ENCODE measurements at regions of chr3 and their contacts with region 1.

Region 1: DNA sequence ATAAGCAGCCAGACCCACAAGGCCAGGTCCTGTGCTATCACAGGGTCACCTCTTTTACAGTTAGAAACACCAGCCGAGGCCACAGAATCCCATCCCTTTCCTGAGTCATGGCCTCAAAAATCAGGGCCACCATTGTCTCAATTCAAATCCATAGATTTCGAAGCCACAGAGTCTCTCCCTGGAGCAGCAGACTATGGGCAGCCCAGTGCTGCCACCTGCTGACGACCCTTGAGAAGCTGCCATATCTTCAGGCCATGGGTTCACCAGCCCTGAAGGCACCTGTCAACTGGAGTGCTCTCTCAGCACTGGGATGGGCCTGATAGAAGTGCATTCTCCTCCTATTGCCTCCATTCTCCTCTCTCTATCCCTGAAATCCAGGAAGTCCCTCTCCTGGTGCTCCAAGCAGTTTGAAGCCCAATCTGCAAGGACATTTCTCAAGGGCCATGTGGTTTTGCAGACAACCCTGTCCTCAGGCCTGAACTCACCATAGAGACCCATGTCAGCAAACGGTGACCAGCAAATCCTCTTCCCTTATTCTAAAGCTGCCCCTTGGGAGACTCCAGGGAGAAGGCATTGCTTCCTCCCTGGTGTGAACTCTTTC is 39.6 kb downstream of the TGM4 start:
- DNase-seq: peak; percentile 40
- ATAC-seq: peak; percentile 85
- H3K4me3 ChIP-seq: no peak overlapping the region
- H3K27ac ChIP-seq: no peak overlapping the region
- H3K4me1 ChIP-seq: no peaks in the 10 kb centered on the region
- H3K27me3 ChIP-seq: no peaks in the 10 kb centered on the region
- CTCF ChIP-seq: peak; percentile 64 to 79 (median 77)
- POLR2A ChIP-seq: no peak
- RAD21 ChIP-seq: peak; percentile 89

Region 2: DNA sequence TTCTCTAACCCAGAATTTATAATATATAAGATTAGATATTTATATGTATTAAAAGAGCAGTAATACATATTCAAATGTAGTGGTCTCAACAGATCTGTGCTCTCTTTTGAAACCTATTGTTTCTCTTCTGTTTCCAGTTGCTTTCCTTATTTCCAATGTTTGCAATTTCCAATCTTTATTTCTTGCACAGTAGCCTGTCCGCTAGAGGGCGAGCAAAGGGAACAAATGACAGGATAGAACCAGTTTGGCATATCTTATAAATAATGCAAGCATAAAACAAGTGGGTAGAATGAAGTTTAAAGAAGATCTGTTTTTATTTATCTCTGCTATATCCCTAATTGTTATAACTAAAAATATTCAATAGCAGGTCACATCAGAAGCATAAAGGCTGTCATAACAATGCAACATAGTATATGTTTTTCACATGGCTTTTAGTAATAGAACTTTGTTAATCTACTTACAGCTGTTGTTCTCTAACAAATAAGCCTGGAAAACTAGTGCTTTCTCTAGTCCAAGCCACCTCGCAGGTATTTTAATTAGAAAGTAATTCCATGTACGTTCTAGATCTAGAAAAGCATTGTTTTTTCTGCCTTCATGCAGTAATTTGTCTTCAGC is 590.5 kb before region 1 on chr3:
- CTCF ChIA-PET with region 1: interaction called, 3 read pairs
- POLR2A ChIA-PET with region 1: no interaction called
- RAD21 ChIA-PET with region 1: no interaction called
- intact Hi-C with region 1: loop called (anchors 1 kb)
- DNase-seq: peak; percentile 46
- ATAC-seq: peak; percentile 76
- H3K4me3 ChIP-seq: no peak overlapping the region
- H3K27ac ChIP-seq: no peak overlapping the region
- H3K4me1 ChIP-seq: peaks cover 0 to 4% of the 10 kb centered on the region in 2 experiments; a peak in 1 of 4 replicates
- H3K27me3 ChIP-seq: no peaks in the 10 kb centered on the region
- CTCF ChIP-seq: peak; percentile 78 to 91 (median 81)
- POLR2A ChIP-seq: no peak
- RAD21 ChIP-seq: peak; percentile 84

Region 3: DNA sequence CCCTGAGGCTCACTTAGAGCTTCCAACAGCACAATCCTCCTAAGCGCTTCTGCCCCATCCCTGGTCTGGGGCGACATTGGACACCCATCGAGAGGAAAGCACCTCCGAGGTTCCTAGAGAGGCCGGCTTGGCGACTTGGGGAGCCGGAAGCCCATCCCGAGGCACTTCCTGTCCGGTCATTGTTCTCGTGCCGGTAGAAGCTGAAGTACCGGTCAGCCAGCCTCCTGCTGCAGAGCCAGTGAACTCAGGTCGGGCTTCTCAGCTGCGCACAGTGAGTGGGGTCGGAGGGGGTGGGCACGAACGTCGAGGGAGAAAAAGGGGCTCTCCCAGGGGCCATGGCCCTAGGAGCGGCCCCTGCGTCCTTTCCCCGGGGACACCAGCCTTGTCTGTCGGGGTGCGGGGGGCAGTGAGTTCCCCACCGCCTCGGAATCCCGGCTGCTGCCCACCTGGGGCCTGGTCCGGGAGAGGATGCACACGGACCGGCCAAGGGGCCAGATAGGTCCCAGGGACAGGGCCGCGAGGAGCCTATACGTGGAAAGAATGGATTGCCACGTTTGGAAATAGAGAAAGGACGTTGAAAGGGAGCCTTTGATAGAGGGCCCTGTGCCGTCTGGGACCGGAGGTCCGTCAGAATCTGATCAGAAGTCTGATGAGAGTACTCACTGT is 265.3 kb before region 1 on chr3 and contains the start of gene ZNF35:
- CTCF ChIA-PET with region 1: no interaction called
- POLR2A ChIA-PET with region 1: no interaction called
- RAD21 ChIA-PET with region 1: no interaction called
- intact Hi-C with region 1: loop called (anchors 10 kb)
- DNase-seq: peak; percentile 87
- ATAC-seq: peak; percentile 98
- H3K4me3 ChIP-seq: peak within 1 kb of the TSS; percentile 96 to 98
- H3K27ac ChIP-seq: peak within 1 kb of the TSS; percentile 52
- H3K4me1 ChIP-seq: peaks cover 4 to 9% of the 10 kb centered on the region in 2 experiments; a peak in 2 of 4 replicates
- H3K27me3 ChIP-seq: no peaks in the 10 kb centered on the region
- CTCF ChIP-seq: no peak
- POLR2A ChIP-seq: peak; percentile 49
- RAD21 ChIP-seq: no peak
- total RNA-seq, gene ZNF35: 7.9 TPM

Region 4: GRCh38 chr3:44932271-44932670 is 18.3 kb after region 1 on chr3:
- CTCF ChIA-PET with region 1: no interaction called
- POLR2A ChIA-PET with region 1: no interaction called
- RAD21 ChIA-PET with region 1: no interaction called
- intact Hi-C with region 1: no loop called
- DNase-seq: no peak
- ATAC-seq: no peak
- H3K4me3 ChIP-seq: no peak overlapping the region
- H3K27ac ChIP-seq: no peak overlapping the region
- H3K4me1 ChIP-seq: no peaks in the 10 kb centered on the region
- H3K27me3 ChIP-seq: no peaks in the 10 kb centered on the region
- CTCF ChIP-seq: no peak
- POLR2A ChIP-seq: no peak
- RAD21 ChIP-seq: no peak

Region 5: DNA sequence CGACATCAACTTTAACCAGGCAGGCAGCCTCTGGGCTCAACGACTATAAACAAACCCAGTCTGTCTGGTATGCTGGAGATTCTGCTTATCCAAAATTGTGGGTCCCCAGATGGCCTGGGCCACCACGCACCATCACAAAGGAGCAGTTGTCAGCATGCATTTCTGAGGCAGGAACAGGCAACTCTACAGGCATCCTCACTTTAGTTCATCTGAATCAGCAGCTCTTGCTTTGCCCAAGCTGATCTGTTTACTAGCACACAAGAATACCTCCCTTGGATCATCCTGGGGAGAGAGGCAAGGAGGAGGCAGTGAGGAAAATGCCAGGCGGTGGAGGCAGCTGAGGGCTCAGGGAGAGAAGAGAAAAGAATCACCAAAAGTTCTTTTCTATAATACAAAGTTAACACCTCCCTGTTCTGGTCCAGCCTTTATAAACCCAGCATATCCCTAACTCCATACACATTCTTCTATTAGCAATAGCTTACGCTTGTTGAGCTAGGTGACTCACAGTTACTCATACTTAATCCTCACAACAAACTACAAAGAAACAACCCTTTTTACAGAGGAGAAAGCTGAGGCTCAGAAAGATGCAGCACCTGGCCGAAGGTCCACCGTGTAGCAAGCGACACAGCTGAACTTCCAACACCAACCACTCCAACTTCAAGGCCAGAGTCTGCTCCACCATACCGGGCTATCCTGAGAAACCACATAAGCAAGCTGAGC is 28.4 kb after region 1 on chr3:
- CTCF ChIA-PET with region 1: no interaction called
- POLR2A ChIA-PET with region 1: no interaction called
- RAD21 ChIA-PET with region 1: no interaction called
- intact Hi-C with region 1: no loop called
- DNase-seq: peak; percentile 7
- ATAC-seq: peak; percentile 60
- H3K4me3 ChIP-seq: no peak overlapping the region
- H3K27ac ChIP-seq: no peak overlapping the region
- H3K4me1 ChIP-seq: peaks cover 0 to 11% of the 10 kb centered on the region in 2 experiments; a peak in 2 of 4 replicates
- H3K27me3 ChIP-seq: no peaks in the 10 kb centered on the region
- CTCF ChIP-seq: no peak
- POLR2A ChIP-seq: no peak
- RAD21 ChIP-seq: no peak; the same call in 1 of the 2 replicates